Body of pancreas (tissue), 4 donors: ENCODE measurements at regions of chr11 and their contacts with region 1.

Region 1: GRCh38 chr11:9137293-9138132 is 46.1 kb upstream of the SCUBE2 start:
- DNase-seq: peak; percentile 82 to 87 (median 85)
- ATAC-seq: peak; percentile 94
- H3K4me3 ChIP-seq: no peak overlapping the region
- H3K27ac ChIP-seq: peak overlapping the region; percentile 53 to 83 (median 72)
- H3K4me1 ChIP-seq: peaks cover 42% of the 10 kb centered on the region
- H3K27me3 ChIP-seq: no peaks in the 10 kb centered on the region
- CTCF ChIP-seq: peak; percentile 90 to 97 (median 96)
- POLR2A ChIP-seq: peak in 2 of 3 donors; percentile 20 to 24

Region 2: DNA sequence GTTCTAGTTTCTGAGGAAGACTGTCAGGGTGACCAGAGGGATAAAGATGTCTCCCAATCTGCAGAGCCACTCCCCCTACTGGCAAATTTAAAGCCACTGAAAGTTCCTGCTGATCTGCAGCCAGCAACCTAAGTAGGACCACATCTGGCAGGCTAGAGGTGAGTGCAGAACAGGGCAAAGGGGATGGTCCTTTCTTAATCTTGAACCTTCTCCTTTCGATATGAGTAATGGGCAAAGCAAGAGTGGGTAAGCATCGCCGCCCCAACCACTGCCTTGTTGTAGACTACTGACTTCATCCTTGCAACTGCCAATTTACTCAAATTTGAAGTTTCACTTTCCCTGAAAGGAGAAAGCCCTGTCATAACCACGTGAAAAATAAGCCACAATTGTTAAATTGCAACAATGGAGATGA is 76.8 kb before region 1 on chr11:
- intact Hi-C with region 1: loop called (anchors 10 kb)
- DNase-seq: no peak
- ATAC-seq: no peak
- H3K4me3 ChIP-seq: no peak overlapping the region
- H3K27ac ChIP-seq: no peak overlapping the region
- H3K4me1 ChIP-seq: no peaks in the 10 kb centered on the region
- H3K27me3 ChIP-seq: no peaks in the 10 kb centered on the region
- CTCF ChIP-seq: no peak
- POLR2A ChIP-seq: no peak